HepG2 (cell line): ENCODE measurements at regions of chr5 and their contacts with region 1.

Region 1: GRCh38 chr5:177607452-177608192 is 7.7 kb downstream of the B4GALT7 start:
- DNase-seq: peak; percentile 58
- ATAC-seq: peak; percentile 94
- H3K4me3 ChIP-seq: no peak overlapping the region
- H3K27ac ChIP-seq: no peak overlapping the region
- H3K4me1 ChIP-seq: peaks cover 9% of the 10 kb centered on the region
- H3K27me3 ChIP-seq: no peaks in the 10 kb centered on the region
- CTCF ChIP-seq: peak; percentile 98
- EP300 ChIP-seq: no peak
- POLR2A ChIP-seq: no peak
- RAD21 ChIP-seq: peak; percentile 87

Region 2: GRCh38 chr5:177071666-177072385 is 535.8 kb before region 1 on chr5:
- CTCF ChIA-PET with region 1: no interaction called
- POLR2A ChIA-PET with region 1: no interaction called
- in situ Hi-C with region 1: no loop called
- intact Hi-C with region 1: no loop called
- DNase-seq: peak; percentile 86
- ATAC-seq: peak; percentile 91
- H3K4me3 ChIP-seq: no peak overlapping the region
- H3K27ac ChIP-seq: no peak overlapping the region
- H3K4me1 ChIP-seq: peaks cover 16% of the 10 kb centered on the region
- H3K27me3 ChIP-seq: no peaks in the 10 kb centered on the region
- CTCF ChIP-seq: peak; percentile 87
- EP300 ChIP-seq: no peak
- POLR2A ChIP-seq: no peak
- RAD21 ChIP-seq: peak; percentile 73

Region 3: DNA sequence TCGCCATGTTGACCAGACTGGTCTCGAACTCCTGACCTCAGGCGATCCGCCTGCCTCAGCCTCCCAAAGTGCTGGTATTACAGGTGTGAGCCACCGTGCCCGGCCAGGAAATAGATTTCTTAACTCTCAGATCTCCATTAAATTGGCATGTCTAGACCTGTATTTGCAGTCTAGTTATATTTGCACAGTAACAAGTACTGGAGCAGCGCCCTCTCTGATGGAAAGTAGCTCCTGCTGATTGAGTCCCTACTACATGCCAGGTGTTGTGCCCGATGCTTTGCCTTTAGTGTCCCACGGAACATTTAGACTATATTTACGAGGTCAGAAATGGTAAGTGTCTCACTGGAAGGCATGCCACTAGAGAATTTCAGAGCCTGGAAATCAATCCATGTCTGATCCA is 31.5 kb before region 1 on chr5:
- CTCF ChIA-PET with region 1: no interaction called
- POLR2A ChIA-PET with region 1: no interaction called
- in situ Hi-C with region 1: no loop called
- intact Hi-C with region 1: loop called (anchors 2 kb)
- DNase-seq: peak; percentile 22
- ATAC-seq: peak; percentile 41; the same call in 1 of the 3 replicates
- H3K4me3 ChIP-seq: no peak overlapping the region
- H3K27ac ChIP-seq: no peak overlapping the region
- H3K4me1 ChIP-seq: no peaks in the 10 kb centered on the region
- H3K27me3 ChIP-seq: no peaks in the 10 kb centered on the region; a peak in 1 of 5 replicates
- CTCF ChIP-seq: 0 out of 2 replicates have a peak, but pooled peaks have one; percentile 19
- EP300 ChIP-seq: no peak
- POLR2A ChIP-seq: no peak
- RAD21 ChIP-seq: no peak